ENCODE measurements at regions of chr10 and their contacts with region 1.

Region 1: DNA sequence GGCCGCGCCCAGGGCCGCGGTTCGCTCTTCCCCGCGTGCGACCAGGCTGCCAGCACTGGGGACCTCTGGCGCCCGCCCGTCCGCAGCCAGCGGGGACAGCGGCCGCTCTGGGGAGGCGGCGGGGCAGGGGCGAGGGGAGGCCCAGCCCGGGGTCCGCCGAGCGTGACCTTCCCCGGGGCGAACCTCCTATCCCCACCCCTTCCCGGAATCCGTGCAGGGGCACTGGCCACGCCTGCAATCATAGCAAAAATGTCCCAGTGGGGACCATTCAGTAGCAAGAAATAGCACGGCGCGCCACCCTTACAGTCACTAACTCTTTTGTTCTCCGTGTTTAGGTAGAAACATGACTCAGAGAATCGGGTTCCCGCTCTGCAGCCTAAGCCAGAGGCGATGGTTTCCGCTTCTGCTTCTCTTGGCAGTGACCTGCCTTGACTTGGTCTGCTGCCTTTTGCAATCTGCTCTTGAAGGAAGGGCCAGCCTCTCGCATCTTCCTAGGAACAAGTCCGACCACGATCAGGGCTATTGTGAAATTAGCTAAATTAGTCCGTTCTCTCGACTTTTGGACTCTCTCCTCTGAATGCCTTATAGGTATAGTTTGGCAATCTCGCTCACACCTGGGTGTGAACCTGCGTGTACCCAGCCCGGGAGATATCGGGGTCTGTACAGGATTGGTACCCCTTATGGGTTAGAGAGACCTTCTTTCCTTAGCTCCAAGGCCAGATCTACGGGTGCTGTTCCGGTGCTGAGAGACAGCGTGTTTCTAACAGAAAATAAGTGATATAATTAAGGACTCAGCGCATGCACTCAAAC is 79.4 kb upstream of the ACBD5 start:
- DNase-seq: peak; percentile 6
- ATAC-seq: no peak; the same call in 1 of the 2 replicates
- H3K4me3 ChIP-seq: no peak overlapping the region
- H3K27ac ChIP-seq: no peak overlapping the region
- H3K4me1 ChIP-seq: no peaks in the 10 kb centered on the region
- H3K27me3 ChIP-seq: no peaks in the 10 kb centered on the region; the same call in 1 of the 2 replicates
- CTCF ChIP-seq: no peak
- POLR2A ChIP-seq: no peak
- RAD21 ChIP-seq: no peak

Region 2: DNA sequence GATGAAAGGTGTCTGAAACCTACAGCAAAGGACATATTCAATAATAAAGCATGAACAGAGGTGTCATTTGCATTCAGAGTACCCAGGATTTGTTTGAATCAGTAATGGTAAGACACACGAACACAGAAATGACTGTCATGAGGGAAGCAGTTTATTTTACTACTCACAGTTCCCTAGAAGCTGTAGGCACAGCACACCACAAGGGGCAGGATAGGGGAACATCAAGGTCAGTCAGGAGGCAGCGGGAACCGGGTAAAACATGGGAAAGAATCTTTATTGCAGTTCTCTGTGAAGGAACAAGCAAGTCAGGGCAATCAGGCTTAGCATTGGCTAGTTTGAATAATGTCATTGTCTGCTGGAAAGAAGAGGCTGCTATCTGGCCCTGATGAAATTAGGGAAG is 692.6 kb before region 1 on chr10:
- CTCF ChIA-PET with region 1: no interaction called
- POLR2A ChIA-PET with region 1: no interaction called
- dilution Hi-C with region 1: no loop called
- in situ Hi-C with region 1: loop called (anchors 5 kb)
- intact Hi-C with region 1: loop called (anchors 2 kb)
- DNase-seq: no peak
- ATAC-seq: no peak
- H3K4me3 ChIP-seq: no peak overlapping the region
- H3K27ac ChIP-seq: no peak overlapping the region
- H3K4me1 ChIP-seq: no peaks in the 10 kb centered on the region
- H3K27me3 ChIP-seq: no peaks in the 10 kb centered on the region; the same call in 1 of the 2 replicates
- CTCF ChIP-seq: no peak
- POLR2A ChIP-seq: no peak
- RAD21 ChIP-seq: no peak